ENCODE measurements at regions of chr3 and their contacts with region 1.

Region 1: GRCh38 chr3:63961891-63962290 is 49.7 kb upstream of the SCAANT1 start:
- DNase-seq: no peak
- H3K4me3 Mint-ChIP-seq: no peak overlapping the region
- H3K27ac Mint-ChIP-seq: no peak overlapping the region
- H3K4me1 Mint-ChIP-seq: peaks cover 43% of the 10 kb centered on the region
- H3K27me3 Mint-ChIP-seq: no peaks in the 10 kb centered on the region

Region 2: GRCh38 chr3:63937661-63938651 is 23.9 kb before region 1 on chr3:
- CTCF ChIA-PET with region 1: no interaction called
- DNase-seq: no peak
- H3K4me3 Mint-ChIP-seq: no peak overlapping the region
- H3K27ac Mint-ChIP-seq: peak overlapping the region; percentile 67
- H3K4me1 Mint-ChIP-seq: peaks cover 53% of the 10 kb centered on the region
- H3K27me3 Mint-ChIP-seq: no peaks in the 10 kb centered on the region

Region 3: DNA sequence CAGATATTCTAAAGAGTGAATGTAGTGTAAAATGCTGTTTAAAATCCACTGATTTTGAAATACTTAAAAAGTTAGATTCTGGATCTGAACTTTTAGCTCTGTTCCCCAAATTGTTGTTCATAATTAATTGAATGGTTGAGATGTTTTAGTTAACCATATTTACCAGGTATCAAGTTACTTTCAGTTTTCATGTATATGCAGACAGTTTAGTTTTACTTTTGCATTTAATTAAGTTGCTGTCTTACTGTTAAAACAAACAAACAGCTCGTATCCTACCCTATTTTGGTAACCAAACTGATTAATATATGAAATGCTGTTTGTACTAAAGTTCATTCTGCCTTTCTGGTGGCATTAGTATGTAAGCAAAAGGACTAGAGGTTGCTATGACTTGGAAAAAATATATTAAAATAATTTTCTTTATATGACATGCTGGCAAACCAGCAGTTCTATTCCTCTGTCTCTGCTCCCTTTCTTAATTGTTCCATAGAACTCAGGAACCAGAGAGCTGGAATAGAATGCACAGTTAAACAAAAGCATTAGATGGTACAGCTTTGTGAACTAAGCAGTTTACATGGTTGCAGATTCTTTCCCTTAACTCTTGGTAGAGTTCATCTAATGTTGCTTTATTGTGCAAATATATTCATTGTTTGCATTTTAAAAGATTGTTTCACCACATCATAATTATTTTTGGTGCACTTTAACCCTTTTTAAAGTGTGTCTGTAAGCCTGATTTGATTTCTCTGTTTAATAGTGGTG is 10.2 kb before region 1 on chr3:
- CTCF ChIA-PET with region 1: interaction called, 11 read pairs
- DNase-seq: no peak
- H3K4me3 Mint-ChIP-seq: peak overlapping the region; percentile 45
- H3K27ac Mint-ChIP-seq: peak overlapping the region; percentile 64
- H3K4me1 Mint-ChIP-seq: peaks cover 44% of the 10 kb centered on the region
- H3K27me3 Mint-ChIP-seq: no peaks in the 10 kb centered on the region

Region 4: DNA sequence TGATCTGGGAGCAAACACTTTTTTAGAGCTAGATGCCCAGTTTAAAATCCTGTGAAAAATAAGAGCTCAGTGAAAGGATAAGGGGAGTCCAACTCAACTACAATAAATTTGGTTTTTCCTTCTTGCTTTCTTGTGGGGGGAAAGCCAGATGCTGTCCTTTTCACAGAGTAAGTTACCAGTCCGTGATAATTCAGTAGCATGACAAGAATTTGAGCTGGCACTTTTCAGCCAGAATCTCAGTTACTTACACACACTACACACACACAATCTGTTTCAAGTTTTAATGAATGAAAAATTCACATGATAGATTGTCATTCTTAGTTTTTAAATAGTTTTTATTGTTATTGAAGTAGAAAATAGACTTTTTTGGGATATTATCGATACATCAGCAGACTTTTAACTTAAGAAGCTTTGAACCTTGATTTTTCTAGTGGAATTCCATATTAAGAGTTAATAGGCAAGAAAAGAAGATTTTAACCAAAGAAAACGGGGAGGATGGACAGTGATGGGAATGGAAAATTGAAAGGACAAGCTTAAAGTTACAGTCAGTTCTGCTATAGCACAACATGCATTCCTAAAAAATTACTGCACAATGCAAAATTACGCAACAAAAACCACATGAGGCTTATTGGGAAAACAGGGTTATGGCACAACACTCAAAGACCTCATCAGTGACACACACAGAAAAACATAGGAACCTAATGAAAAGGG is 14.4 kb after region 1 on chr3:
- CTCF ChIA-PET with region 1: interaction called, 28 read pairs
- DNase-seq: no peak
- H3K4me3 Mint-ChIP-seq: no peak overlapping the region
- H3K27ac Mint-ChIP-seq: peak overlapping the region; percentile 34
- H3K4me1 Mint-ChIP-seq: peaks cover 93% of the 10 kb centered on the region
- H3K27me3 Mint-ChIP-seq: no peaks in the 10 kb centered on the region

Region 5: GRCh38 chr3:63993653-63994079 is 31.8 kb after region 1 on chr3:
- CTCF ChIA-PET with region 1: interaction called, 139 read pairs
- DNase-seq: peak; percentile 64
- H3K4me3 Mint-ChIP-seq: no peak overlapping the region
- H3K27ac Mint-ChIP-seq: peak overlapping the region; percentile 45
- H3K4me1 Mint-ChIP-seq: peaks cover 46% of the 10 kb centered on the region
- H3K27me3 Mint-ChIP-seq: no peaks in the 10 kb centered on the region

Measured in activated naive CD4-positive, alpha-beta T cell treated with anti-CD3 and anti-CD28 coated beads, Interleukin-2, amount 10 ng/mL, durations not matched to agents 7 days and 5 days (primary cell).